ENCODE measurements at regions of chr5 and their contacts with region 1.

Region 1: DNA sequence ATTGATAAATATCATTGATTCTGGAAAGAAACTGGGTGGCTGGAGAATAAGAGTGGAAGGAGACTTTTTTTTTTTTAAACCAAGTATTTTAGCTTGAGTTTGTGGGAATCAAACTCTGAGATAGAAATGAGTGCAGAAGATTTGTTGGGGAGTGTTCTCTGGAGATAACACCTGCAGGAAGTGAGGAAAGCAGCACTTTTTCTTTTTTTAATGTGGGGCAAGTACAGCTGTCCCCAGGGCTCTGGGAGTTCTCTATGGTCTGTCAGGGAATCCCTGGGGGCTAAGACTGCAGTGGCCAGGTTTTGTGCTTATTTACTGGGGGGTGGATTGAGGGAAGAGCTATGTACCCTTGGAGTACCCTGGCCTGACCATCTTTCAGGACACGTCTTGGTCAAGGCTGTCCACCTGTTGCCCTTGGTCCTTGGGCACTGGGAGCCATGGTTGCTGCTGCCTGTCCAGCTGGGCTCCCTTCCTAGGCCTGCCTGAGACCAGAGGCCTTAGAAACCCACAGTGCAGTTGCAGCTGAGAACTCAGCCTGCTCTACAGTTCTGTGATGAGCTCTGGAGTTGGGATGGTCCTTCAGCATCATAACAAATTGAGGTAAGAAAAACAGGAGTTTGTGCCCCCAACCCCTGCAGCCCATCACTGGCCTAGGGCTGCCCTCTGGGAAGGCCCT is 85.8 kb downstream of the PHAX start:
- DNase-seq: no peak
- ATAC-seq: no peak
- H3K4me3 ChIP-seq: no peak overlapping the region
- H3K27ac ChIP-seq: no peak overlapping the region
- H3K4me1 ChIP-seq: no peaks in the 10 kb centered on the region
- H3K27me3 ChIP-seq: no peaks in the 10 kb centered on the region
- CTCF ChIP-seq: no peak

Region 2: DNA sequence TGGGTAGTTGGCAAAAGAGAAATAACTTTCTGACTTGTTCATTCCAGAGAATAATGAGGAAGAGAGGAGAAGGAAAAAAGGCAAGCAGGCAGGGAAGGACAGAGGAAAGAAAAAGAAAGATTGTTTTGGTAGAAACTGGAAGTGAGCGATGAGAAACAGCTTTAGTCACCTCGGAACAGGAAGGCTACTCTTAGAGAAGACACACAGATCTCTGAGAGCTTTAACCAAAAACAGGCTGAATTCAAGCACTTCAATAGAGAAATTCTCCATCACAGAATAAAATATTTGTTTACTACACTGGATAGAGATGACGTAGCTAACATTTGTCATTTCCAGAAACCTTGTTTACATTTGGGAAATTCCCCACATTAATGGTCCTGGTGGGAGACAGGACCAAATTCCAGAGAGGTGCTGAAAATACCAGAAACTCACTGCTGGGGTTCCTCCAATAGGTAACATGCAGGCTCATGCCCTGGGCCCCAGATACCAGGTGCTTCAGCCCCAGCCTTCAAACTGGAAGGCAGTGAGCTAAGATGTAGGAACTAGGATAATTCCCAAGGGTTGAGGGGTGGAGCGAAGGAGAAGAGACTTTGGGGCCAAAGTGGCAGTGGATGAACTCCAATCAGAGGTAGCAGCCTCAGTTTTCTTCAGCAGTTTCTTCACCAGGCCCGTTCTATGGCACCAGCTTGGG is 491.0 kb before region 1 on chr5:
- CTCF ChIA-PET with region 1: no interaction called
- POLR2A ChIA-PET with region 1: no interaction called
- in situ Hi-C with region 1: no loop called
- intact Hi-C with region 1: no loop called
- DNase-seq: no peak
- ATAC-seq: no peak
- H3K4me3 ChIP-seq: no peak overlapping the region
- H3K27ac ChIP-seq: no peak overlapping the region; the same call in 1 of the 2 replicates
- H3K4me1 ChIP-seq: no peaks in the 10 kb centered on the region
- H3K27me3 ChIP-seq: no peaks in the 10 kb centered on the region
- CTCF ChIP-seq: no peak

Region 3: GRCh38 chr5:126718246-126718868 is 31.8 kb after region 1 on chr5:
- CTCF ChIA-PET with region 1: interaction called, 12 read pairs
- POLR2A ChIA-PET with region 1: no interaction called
- in situ Hi-C with region 1: no loop called
- intact Hi-C with region 1: no loop called
- DNase-seq: no peak
- ATAC-seq: peak; percentile 26; the same call in 1 of the 2 replicates
- H3K4me3 ChIP-seq: no peak overlapping the region
- H3K27ac ChIP-seq: no peak overlapping the region
- H3K4me1 ChIP-seq: no peaks in the 10 kb centered on the region
- H3K27me3 ChIP-seq: no peaks in the 10 kb centered on the region
- CTCF ChIP-seq: no peak

Region 4: DNA sequence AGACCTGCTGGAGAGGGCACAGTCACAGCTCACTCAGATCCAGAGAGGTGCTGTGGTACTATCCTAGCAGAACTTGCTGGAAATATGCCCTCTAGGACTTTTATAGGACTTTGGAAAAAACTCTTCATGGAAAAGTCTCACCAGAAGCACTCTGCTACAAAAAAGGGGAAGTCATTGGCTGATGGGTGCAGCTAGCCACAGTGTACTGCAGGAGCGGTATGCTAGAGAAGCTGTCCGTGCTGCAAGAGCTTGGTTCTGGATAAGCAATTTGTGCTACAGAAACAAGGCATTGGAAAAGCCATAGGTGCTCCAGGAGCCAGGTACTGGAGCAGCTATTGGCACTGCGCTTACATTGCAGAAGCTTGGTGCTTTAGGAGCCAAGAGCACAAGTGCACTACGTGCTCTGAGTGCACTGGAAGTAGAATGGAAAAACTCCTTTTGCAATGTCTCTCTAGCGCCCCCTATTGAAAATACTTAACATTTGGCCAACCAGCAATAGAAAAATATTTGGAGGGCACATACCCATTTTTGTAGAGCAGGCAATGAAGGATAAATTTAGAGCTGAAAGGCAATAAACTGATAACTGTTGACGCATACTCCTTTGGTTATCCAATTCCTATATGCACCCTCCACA is 687.4 kb after region 1 on chr5:
- CTCF ChIA-PET with region 1: no interaction called
- POLR2A ChIA-PET with region 1: interaction called, 16 read pairs
- in situ Hi-C with region 1: no loop called
- intact Hi-C with region 1: no loop called
- DNase-seq: no peak
- ATAC-seq: no peak
- H3K4me3 ChIP-seq: no peak overlapping the region
- H3K27ac ChIP-seq: no peak overlapping the region
- H3K4me1 ChIP-seq: no peaks in the 10 kb centered on the region
- H3K27me3 ChIP-seq: peaks cover 2% of the 10 kb centered on the region; the same call in 1 of the 2 replicates
- CTCF ChIP-seq: peak; percentile 59

Region 5: DNA sequence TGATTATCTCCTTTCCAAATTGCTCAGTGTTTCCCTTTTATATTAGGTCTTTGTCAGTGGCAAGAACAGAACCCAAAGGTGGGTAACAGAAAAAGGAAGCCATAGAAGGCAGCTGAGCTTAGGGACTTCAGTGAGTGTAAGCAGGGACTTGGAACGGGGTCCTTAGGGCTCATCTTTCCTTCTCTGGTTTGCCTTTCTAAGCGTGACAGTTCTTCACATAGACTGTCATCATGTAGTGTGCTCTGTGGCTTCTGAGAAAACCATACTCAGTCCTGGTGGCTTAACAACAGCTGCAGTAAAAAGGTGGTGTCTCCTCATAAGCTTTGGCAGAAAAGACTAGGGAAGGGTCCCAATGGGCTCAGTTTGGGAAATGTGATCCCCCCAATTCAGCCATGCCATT is 1505.8 kb after region 1 on chr5:
- CTCF ChIA-PET with region 1: no interaction called
- POLR2A ChIA-PET with region 1: interaction called, 12 read pairs
- in situ Hi-C with region 1: no loop called
- intact Hi-C with region 1: no loop called
- DNase-seq: no peak
- ATAC-seq: no peak
- H3K4me3 ChIP-seq: no peak overlapping the region
- H3K27ac ChIP-seq: no peak overlapping the region
- H3K4me1 ChIP-seq: no peaks in the 10 kb centered on the region
- H3K27me3 ChIP-seq: no peaks in the 10 kb centered on the region
- CTCF ChIP-seq: no peak

Measured in Panc1 (cell line).